GM12878 (cell line): ENCODE measurements at regions of chr2 and their contacts with region 1.

Region 1: DNA sequence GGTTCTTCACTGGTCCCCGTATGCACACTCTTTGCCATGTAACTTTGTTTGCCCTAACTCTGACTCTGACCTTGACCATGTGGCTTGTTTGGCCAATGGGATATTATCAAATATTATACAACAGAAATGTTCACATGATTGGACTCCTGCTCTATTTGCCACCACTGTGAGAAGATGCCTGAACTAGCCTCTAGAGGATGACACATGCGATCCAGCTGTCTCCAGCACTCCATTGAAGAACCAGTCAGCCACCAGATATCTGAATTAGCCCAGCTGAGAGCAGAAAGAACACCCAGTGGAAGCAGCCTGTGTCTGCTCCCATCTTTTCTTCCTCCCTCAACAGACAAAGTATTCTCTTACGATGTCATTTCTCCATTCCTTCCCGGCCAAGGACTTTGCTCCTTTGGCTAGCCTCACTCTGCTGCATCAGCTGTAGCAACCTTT is 412.1 kb downstream of the IRS1 start:
- DNase-seq: no peak
- ATAC-seq: no peak
- H3K4me3 ChIP-seq: no peak overlapping the region
- H3K27ac ChIP-seq: no peak overlapping the region
- H3K4me1 ChIP-seq: no peaks in the 10 kb centered on the region
- H3K27me3 ChIP-seq: no peaks in the 10 kb centered on the region
- CTCF ChIP-seq: no peak
- EP300 ChIP-seq: no peak
- POLR2A ChIP-seq: no peak
- RAD21 ChIP-seq: no peak

Region 2: DNA sequence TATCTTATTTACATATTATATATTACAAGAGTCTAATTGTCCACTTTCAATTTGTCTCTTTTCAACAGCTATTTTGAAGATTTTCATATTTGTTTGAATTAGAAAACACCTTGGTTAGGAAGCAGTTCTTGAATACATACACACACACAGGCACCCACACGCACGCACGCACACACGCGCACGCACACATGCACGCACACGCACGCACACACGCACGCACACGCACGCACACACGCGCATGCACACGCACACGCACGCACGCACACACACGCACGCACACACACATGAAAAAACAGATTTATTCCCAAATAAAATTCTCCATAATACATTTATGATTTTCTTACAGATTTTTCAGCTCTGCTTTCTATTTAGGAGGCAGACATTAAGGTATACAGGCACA is 767.3 kb before region 1 on chr2:
- CTCF ChIA-PET with region 1: no interaction called
- POLR2A ChIA-PET with region 1: no interaction called
- RAD21 ChIA-PET with region 1: interaction called, 10 read pairs
- SMC1A ChIA-PET with region 1: no interaction called
- in situ Hi-C with region 1: no loop called
- intact Hi-C with region 1: no loop called
- DNase-seq: no peak
- ATAC-seq: no peak
- H3K4me3 ChIP-seq: no peak overlapping the region
- H3K27ac ChIP-seq: no peak overlapping the region
- H3K4me1 ChIP-seq: no peaks in the 10 kb centered on the region
- H3K27me3 ChIP-seq: no peaks in the 10 kb centered on the region
- CTCF ChIP-seq: no peak
- EP300 ChIP-seq: no peak
- POLR2A ChIP-seq: no peak
- RAD21 ChIP-seq: no peak

Region 3: GRCh38 chr2:225649274-225649673 is 738.2 kb before region 1 on chr2:
- CTCF ChIA-PET with region 1: no interaction called
- POLR2A ChIA-PET with region 1: no interaction called
- RAD21 ChIA-PET with region 1: no interaction called
- SMC1A ChIA-PET with region 1: no interaction called
- in situ Hi-C with region 1: no loop called
- intact Hi-C with region 1: no loop called
- DNase-seq: no peak
- ATAC-seq: no peak
- H3K4me3 ChIP-seq: no peak overlapping the region
- H3K27ac ChIP-seq: no peak overlapping the region
- H3K4me1 ChIP-seq: no peaks in the 10 kb centered on the region
- H3K27me3 ChIP-seq: no peaks in the 10 kb centered on the region
- CTCF ChIP-seq: no peak
- EP300 ChIP-seq: no peak
- POLR2A ChIP-seq: no peak
- RAD21 ChIP-seq: no peak

Region 4: GRCh38 chr2:226325526-226325925 is 62.0 kb before region 1 on chr2:
- CTCF ChIA-PET with region 1: no interaction called
- POLR2A ChIA-PET with region 1: no interaction called
- RAD21 ChIA-PET with region 1: no interaction called
- SMC1A ChIA-PET with region 1: no interaction called
- in situ Hi-C with region 1: no loop called
- intact Hi-C with region 1: no loop called
- DNase-seq: no peak
- ATAC-seq: no peak
- H3K4me3 ChIP-seq: no peak overlapping the region
- H3K27ac ChIP-seq: no peak overlapping the region
- H3K4me1 ChIP-seq: no peaks in the 10 kb centered on the region
- H3K27me3 ChIP-seq: no peaks in the 10 kb centered on the region
- CTCF ChIP-seq: no peak
- EP300 ChIP-seq: no peak
- POLR2A ChIP-seq: no peak
- RAD21 ChIP-seq: no peak